Posterior vena cava (tissue), 2 donors: ENCODE measurements at regions of chr9 and their contacts with region 1.

Region 1: DNA sequence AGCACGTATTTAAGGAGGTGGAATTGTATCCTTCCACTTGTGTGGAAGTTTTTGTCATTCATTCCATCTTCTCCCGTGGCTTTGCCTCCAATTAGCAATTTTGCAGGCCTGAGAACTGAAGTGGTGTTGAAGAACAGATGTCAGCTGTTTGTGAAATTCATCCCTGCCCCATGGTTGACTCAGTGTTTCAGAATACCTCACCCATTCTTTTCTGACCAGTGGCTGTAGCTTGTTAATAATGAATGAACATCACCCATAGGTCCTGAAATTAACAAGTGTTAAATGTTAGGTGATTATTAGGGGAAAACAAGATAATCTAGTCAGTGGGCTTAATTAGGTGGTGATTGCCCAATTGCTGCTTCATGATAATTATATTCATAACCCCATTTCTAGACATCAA is 11.7 kb downstream of the ZNF462 start:
- DNase-seq: no peak

Region 2: DNA sequence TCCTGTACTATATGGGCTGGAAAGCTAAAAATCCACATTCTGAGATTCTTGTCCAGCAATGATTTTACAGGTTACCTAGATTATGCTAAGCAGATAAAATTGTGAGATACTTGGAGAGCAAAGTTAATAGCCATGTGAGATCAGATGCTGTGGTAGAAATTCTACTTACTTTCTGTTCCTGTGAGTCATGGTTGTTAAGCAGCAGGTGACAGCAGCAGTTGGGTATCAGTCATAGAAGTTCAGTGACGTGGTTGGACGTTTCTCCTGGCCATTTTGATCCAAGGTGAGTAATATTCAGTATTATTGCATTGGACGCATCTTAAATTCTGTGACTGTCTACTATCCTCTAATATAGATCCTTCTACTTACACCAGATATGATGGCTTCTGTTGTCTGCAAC is 655.8 kb before region 1 on chr9:
- intact Hi-C with region 1: loop called in 1 of 2 experiments (anchors 5 kb)
- DNase-seq: no peak

Region 3: DNA sequence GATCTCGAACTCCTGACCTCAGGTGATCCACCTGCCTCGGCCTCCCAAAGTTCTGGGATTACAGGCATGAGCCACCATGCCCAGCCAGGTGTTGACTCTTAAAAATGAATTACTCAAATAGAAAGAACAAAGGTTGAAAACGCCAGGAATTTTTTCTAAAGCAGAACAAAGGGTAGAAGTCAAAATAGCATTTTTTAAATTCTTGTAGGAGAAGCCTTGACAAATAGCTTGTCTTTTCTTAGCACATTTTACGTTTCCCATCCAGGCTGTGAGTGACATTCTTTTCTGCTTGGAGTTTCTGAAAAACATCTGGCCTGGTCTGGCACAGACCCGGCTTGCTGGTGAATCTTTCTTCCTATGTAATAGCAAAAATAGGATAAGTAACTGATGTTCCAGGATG is 181.1 kb before region 1 on chr9:
- intact Hi-C with region 1: no loop called
- DNase-seq: no peak